Heart right ventricle (tissue), 16 donors: ENCODE measurements at regions of chr2 and their contacts with region 1.

Region 1: DNA sequence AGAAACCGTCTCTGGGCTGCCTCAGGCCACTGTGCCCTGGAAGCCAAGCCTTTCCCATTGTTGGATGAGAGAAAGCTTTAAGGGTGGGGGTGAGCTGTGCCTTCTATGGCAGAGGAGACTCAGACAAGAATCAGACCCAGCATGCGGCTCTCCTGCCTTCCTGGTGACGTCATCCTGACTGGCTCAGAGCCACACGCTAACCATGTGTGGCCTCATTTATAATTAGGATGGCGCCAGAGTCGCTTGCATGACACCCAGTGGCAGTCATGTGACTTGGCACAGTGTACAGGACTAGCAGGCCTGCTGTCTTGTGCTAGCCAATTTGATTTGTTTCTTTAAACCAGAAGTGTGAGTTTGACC is 99.2 kb downstream of the SH3BP4 start:
- DNase-seq: peak; percentile 91 to 94
- ATAC-seq: peak; percentile 87 to 96 (median 92)
- H3K4me3 ChIP-seq: peak overlapping the region in 1 of 10 donors; percentile 26
- H3K27ac ChIP-seq: peak overlapping the region; percentile 44 to 88 (median 71)
- H3K4me1 ChIP-seq: peaks cover 13 to 50% (median 43%) of the 10 kb centered on the region in 9 donors
- H3K27me3 ChIP-seq: no peaks in the 10 kb centered on the region
- CTCF ChIP-seq: peak in 5 of 9 donors; percentile 10 to 47 (median 37)

Region 2: DNA sequence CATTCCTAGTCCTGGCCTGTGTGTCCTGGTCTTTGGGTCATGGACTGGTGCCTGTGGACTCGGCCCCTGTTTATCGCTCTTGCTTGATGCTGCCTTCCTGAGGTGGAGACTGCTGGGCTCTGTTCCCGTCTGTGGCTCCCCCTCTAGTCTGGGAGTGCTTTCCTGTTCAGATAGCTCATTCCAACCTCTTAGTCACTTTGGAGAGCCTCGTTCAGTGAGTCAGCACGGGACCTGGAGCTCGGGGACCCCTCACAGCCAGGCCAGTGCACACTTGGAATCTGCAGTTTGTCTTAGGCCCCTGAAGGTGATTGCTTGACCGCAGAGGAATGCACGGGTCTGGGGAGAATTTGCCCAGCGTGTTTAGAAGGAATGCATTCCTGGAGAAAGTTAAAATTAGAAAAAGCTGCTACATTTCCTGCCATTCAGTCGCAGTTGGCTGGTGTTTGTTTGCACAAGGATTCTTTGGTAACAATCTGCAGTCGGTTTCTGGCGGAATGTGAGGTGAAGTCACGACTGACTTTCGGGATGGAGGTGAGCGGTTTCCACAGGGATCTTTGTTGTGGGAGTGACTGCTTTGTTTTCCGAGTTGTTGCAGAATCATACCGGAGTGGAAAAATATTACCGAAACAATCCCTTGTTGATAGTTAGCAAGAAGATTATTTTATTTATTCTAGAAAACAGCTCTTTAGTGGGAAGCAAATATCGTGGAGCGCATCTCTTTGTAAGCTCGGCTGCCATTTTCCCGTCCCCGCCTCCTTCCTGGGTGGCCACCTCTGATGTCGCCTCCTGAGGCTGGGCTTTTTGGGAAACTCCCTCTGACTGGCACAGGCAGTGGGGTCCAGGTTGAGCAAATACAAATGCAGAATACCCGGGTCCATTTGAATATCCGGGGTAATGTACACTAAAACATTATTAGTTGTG is 69.5 kb before region 1 on chr2:
- intact Hi-C with region 1: loop called in 2 of 10 experiments (anchors 5 to 10 kb)
- DNase-seq: peak; percentile 64 to 77
- ATAC-seq: peak; percentile 74 to 95 (median 90)
- H3K4me3 ChIP-seq: peak overlapping the region in 8 of 10 donors; percentile 12 to 44 (median 30)
- H3K27ac ChIP-seq: peak overlapping the region in 9 of 10 donors; percentile 61 to 87 (median 81)
- H3K4me1 ChIP-seq: peaks cover 19 to 97% (median 60%) of the 10 kb centered on the region in 9 donors
- H3K27me3 ChIP-seq: no peaks in the 10 kb centered on the region
- CTCF ChIP-seq: peak in 3 of 9 donors; percentile 25 to 31 (median 26)

Region 3: DNA sequence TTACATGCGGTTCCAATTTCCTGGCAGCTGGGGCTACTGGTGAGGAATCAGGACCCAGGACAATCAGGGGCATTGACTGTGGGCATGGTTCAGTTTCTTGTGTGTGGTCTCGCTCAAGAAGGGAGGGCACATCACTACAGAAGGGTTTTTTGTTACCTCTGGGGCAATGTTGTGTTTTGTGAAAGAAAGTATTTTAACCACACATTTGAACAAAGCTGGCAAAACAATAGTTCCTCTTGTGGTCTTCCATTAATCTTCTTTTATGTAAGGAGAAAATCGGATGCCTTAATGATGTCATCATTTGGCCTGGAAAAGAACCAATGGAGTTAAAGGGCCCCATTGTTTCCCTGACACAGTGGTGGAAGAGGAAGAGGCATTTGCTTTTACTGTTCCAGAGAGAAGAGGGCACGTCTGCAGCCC is 98.3 kb after region 1 on chr2:
- intact Hi-C with region 1: no loop called
- DNase-seq: no peak
- ATAC-seq: no peak
- H3K4me3 ChIP-seq: no peak overlapping the region
- H3K27ac ChIP-seq: no peak overlapping the region
- H3K4me1 ChIP-seq: no peaks in the 10 kb centered on the region
- H3K27me3 ChIP-seq: peaks cover 0 to 46% (median 9%) of the 10 kb centered on the region in 7 donors
- CTCF ChIP-seq: no peak

Region 4: GRCh38 chr2:235216901-235217300 is 165.9 kb after region 1 on chr2:
- intact Hi-C with region 1: no loop called
- DNase-seq: no peak
- ATAC-seq: no peak
- H3K4me3 ChIP-seq: no peak overlapping the region
- H3K27ac ChIP-seq: no peak overlapping the region
- H3K4me1 ChIP-seq: no peaks in the 10 kb centered on the region
- H3K27me3 ChIP-seq: peaks cover 0 to 17% (median 6%) of the 10 kb centered on the region in 7 donors
- CTCF ChIP-seq: no peak